ENCODE measurements at regions of chr1 and their contacts with region 1.

Region 1: DNA sequence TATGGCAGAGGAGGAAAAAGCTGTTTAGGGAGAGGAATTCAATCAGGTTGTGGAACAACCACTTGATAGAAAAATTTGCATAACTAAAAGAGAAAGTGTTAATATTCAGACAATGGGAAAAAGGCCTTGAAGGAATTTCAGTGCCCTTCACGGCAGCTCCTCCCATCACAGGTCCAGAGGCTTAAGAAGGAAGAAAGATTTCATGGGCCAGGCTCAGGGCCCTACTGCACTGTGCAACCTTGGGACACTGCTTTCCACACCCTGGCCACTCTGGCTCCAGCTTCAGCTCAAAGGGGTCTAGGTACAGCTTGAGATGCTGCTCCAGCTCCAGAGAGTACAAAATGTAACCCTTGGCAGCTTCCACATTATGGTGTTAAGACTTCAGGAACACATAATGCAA is 1206.4 kb upstream of the PRMT6 start:
- DNase-seq: no peak
- H3K4me3 ChIP-seq: no peak overlapping the region
- H3K27ac ChIP-seq: no peak overlapping the region
- H3K4me1 ChIP-seq: no peaks in the 10 kb centered on the region
- H3K27me3 ChIP-seq: no peaks in the 10 kb centered on the region
- CTCF ChIP-seq: no peak

Region 2: DNA sequence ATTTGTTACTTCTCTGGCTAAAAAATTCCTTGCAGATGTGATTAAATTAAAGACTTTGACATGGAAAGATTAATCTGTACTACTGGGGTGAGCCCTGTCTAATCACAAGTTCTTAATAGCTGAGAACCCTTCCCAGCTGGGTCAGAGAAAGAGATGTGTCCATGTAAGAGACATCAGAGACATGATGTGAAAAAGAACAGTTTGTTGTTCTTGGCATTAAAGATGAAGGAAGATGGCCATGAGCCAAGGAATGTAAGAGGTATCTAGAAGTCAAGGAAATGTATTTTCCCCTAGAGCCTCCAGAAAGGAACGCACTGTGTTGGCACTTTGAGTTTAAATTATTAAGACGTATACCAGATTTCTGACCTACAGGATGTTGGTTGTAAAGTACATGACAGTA is 65.0 kb before region 1 on chr1:
- intact Hi-C with region 1: no loop called
- DNase-seq: no peak
- H3K4me3 ChIP-seq: no peak overlapping the region
- H3K27ac ChIP-seq: no peak overlapping the region
- H3K4me1 ChIP-seq: no peaks in the 10 kb centered on the region
- H3K27me3 ChIP-seq: no peaks in the 10 kb centered on the region
- CTCF ChIP-seq: no peak

Region 3: GRCh38 chr1:105894006-105894405 is 44.0 kb after region 1 on chr1:
- intact Hi-C with region 1: loop called (anchors 2 kb)
- DNase-seq: no peak
- H3K4me3 ChIP-seq: no peak overlapping the region
- H3K27ac ChIP-seq: no peak overlapping the region
- H3K4me1 ChIP-seq: no peaks in the 10 kb centered on the region
- H3K27me3 ChIP-seq: no peaks in the 10 kb centered on the region
- CTCF ChIP-seq: no peak

Measured in tibial artery (tissue), 4 donors.